Endothelial cell of umbilical vein (primary cell): ENCODE measurements at regions of chr12 and their contacts with region 1.

Region 1: DNA sequence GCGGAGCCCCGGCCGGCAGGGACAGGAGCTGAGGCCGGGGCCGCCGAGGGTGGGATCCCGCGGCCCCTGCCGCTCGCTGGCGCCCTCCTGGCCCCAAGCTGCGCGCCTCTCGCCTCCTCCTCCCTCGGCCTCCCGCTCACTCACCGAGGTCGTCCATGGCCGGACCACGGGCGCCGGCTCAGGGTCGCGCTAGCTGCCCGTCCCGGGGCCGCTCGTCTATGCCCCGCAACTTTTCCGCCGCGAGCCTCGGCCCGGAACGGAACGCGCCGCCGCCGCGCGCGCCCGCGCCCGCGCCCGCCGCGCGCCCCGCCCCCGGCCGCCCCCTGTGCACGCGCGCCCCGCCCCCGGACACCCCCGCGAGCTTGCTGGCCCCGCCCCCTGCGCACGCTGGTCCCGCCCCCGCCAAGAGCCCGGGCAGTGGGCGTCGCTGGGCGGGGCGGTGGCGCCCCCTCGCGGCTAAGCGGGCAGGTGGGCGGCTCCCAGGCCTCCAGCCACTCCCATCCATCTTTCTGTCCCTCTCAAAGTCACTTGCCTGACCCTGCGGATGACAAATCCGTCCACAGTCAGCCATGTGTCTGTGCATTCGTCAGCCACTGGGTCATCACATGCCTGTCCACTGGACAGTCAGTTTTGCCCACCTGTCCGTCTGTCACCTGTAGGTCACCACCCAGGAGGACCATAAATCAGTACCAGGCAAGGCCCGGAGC is at the start of gene PXN:
- DNase-seq: peak; percentile 74
- H3K4me3 ChIP-seq: peak within 1 kb of the TSS; percentile 60 to 91 (median 65)
- H3K27ac ChIP-seq: peak within 1 kb of the TSS; percentile 58
- H3K4me1 ChIP-seq: peaks cover 45% of the 10 kb centered on the region
- H3K27me3 ChIP-seq: no peaks in the 10 kb centered on the region
- CTCF ChIP-seq: peak; percentile 70 to 79
- POLR2A ChIP-seq: peak; percentile 55
- total RNA-seq, gene PXN: 228 and 258 TPM in 2 replicates

Region 2: GRCh38 chr12:120167529-120168095 is 98.0 kb before region 1 on chr12:
- CTCF ChIA-PET with region 1: interaction called, 10 read pairs
- POLR2A ChIA-PET with region 1: no interaction called
- dilution Hi-C with region 1: no loop called
- intact Hi-C with region 1: no loop called
- DNase-seq: peak; percentile 54
- H3K4me3 ChIP-seq: no peak overlapping the region
- H3K27ac ChIP-seq: peak overlapping the region; percentile 62
- H3K4me1 ChIP-seq: peaks cover 12% of the 10 kb centered on the region
- H3K27me3 ChIP-seq: no peaks in the 10 kb centered on the region
- CTCF ChIP-seq: no peak
- POLR2A ChIP-seq: no peak

Region 3: GRCh38 chr12:120200364-120200800 is 65.2 kb before region 1 on chr12:
- CTCF ChIA-PET with region 1: interaction called, 55 read pairs
- POLR2A ChIA-PET with region 1: interaction called, 76 read pairs
- dilution Hi-C with region 1: no loop called
- intact Hi-C with region 1: loop called (anchors 1 kb)
- DNase-seq: peak; percentile 27
- H3K4me3 ChIP-seq: peak overlapping the region; percentile 31 to 84 (median 78)
- H3K27ac ChIP-seq: peak overlapping the region; percentile 34
- H3K4me1 ChIP-seq: peaks cover 42% of the 10 kb centered on the region
- H3K27me3 ChIP-seq: no peaks in the 10 kb centered on the region
- CTCF ChIP-seq: no peak
- POLR2A ChIP-seq: no peak

Region 4: DNA sequence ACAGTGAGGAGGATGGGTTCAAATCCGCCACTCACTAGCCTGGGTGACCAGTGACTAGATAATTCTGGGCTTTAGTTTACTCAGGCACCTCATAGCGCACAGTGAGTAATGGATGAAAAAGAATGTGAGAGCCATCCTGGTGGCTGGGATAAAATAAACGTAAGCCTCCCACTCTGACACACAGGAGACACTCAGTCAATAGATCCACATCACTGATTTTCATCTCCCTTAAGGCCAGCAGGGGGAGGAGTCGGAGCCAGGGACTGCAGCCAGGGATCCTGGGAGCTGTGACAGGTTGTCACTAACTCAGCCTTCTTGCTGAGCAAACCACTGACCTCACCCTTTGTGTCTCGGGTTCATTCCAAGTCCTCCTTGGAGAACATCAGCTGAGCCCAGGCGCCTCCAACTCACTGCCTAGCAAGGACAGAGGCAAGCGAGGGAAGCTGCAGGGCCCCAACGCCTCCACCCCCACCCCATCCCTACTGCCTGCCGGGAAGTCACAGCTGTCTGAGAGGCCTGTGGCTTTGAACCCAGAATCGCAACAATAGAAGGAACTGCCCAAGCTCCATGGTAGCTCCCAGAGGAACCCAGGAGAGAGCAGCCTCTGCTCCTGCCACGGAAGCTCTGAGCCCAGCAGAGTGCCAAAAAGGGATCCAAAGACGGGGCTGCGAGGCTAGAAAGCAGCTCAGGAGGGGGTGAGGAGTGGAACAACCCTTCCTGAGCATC is 30.8 kb before region 1 on chr12:
- CTCF ChIA-PET with region 1: interaction called, 1,402 read pairs
- POLR2A ChIA-PET with region 1: interaction called, 88 read pairs
- dilution Hi-C with region 1: no loop called
- intact Hi-C with region 1: no loop called
- DNase-seq: peak; percentile 79
- H3K4me3 ChIP-seq: no peak overlapping the region
- H3K27ac ChIP-seq: peak overlapping the region; percentile 100
- H3K4me1 ChIP-seq: peaks cover 87% of the 10 kb centered on the region
- H3K27me3 ChIP-seq: no peaks in the 10 kb centered on the region
- CTCF ChIP-seq: peak; percentile 50 to 55
- POLR2A ChIP-seq: peak; percentile 22

Region 5: GRCh38 chr12:120249875-120250795 is 15.5 kb before region 1 on chr12:
- CTCF ChIA-PET with region 1: interaction called, 906 read pairs
- POLR2A ChIA-PET with region 1: interaction called, 8 read pairs
- dilution Hi-C with region 1: no loop called
- intact Hi-C with region 1: loop called (anchors 2 kb)
- DNase-seq: peak; percentile 53
- H3K4me3 ChIP-seq: peak overlapping the region in 1 of 3 experiments; percentile 5
- H3K27ac ChIP-seq: peak overlapping the region; percentile 56
- H3K4me1 ChIP-seq: peaks cover 66% of the 10 kb centered on the region
- H3K27me3 ChIP-seq: no peaks in the 10 kb centered on the region
- CTCF ChIP-seq: no peak
- POLR2A ChIP-seq: peak; percentile 43

Region 6: DNA sequence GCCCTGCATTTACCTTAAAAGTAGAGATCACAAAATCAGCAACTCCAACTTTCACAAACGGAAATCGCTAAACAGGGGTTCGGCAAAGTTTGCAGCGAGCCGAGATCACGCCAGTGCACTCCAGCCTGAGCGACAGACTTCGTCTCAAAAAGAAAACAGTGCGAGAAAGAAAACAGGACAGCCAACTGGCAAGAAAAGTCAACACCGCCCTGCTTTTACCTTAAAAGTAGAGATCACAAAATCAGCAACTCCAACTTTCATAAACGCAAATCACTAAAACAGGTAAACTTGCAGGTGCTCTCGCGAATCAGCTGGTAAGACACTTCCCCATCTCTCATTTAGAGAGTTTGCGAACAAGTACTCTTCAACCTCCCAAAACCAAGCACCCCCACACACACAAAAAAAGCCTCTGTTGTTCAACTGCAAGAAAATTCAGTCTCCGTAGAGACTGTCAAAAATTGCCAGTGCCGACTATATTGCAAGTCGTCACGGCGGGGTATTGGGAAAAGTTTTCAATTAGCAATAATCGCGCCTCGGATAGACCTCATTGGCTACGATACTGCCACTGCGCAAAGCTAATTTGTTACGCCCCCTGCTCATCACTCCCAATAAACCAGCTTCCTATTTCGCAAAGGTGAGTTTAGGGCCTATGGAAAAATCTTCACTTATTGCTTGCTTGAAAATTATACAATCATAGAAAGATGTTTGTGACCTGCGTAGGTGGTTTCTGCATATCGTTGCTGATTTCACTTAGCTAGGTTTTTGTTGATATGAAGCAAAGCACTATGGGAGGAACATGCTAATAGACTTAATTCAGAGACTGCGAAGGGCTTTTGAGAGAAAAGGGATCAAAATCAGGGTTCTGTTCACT is 27.3 kb after region 1 on chr12 and contains the start of gene RNU4-1:
- CTCF ChIA-PET with region 1: interaction called, 47 read pairs
- POLR2A ChIA-PET with region 1: interaction called, 39 read pairs
- dilution Hi-C with region 1: no loop called
- intact Hi-C with region 1: loop called (anchors 1 kb)
- DNase-seq: peak; percentile 89
- H3K4me3 ChIP-seq: peak within 1 kb of the TSS; percentile 22 to 64 (median 45)
- H3K27ac ChIP-seq: peak within 1 kb of the TSS; percentile 100
- H3K4me1 ChIP-seq: peaks cover 9% of the 10 kb centered on the region
- H3K27me3 ChIP-seq: no peaks in the 10 kb centered on the region
- CTCF ChIP-seq: no peak
- POLR2A ChIP-seq: peak; percentile 100
- total RNA-seq, gene RNU4-1: 2,141 and 7,155 TPM in 2 replicates